ENCODE measurements at regions of chr19 and their contacts with region 1.

Region 1: DNA sequence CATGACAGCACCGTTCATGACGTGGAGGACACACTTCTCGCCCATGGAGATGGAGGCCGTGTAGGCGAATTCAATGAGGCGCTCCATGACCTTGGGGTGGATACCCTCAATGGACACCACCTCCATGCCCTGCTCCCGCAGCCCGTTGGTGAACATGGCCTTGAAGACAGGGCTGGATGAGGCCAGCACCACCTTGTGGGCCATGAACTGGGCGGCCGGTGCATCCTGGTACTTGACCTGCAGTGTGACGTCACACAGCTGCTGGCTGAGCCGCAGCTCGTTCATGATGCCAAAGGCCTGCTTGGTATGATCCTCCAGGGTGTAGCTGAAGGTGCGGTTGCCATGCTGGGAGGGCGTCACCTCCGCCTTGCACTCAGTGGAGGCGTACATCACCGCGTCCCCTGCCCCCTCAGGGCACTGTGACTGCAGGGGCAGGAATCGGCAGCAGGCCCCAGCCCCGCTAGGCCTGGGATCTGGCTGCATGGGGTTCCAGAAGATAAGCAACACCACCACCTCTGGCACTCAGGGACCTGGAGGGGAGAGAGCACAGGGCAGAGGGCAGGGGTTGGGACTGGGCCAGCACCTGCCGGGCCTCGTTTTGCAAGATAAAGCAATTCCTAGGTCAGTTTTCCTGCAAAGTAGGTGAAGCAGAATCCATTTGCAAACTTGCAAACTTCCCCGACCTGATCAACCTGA is 3.5 kb downstream of the KEAP1 start:
- DNase-seq: peak in 1 of 2 experiments; percentile 22
- ATAC-seq: no peak
- H3K4me3 ChIP-seq: no peak overlapping the region
- H3K27ac ChIP-seq: no peak overlapping the region
- H3K4me1 ChIP-seq: peaks cover 21% of the 10 kb centered on the region
- CTCF ChIP-seq: no peak
- EP300 ChIP-seq: no peak
- POLR2A ChIP-seq: no peak
- RAD21 ChIP-seq: no peak

Region 2: DNA sequence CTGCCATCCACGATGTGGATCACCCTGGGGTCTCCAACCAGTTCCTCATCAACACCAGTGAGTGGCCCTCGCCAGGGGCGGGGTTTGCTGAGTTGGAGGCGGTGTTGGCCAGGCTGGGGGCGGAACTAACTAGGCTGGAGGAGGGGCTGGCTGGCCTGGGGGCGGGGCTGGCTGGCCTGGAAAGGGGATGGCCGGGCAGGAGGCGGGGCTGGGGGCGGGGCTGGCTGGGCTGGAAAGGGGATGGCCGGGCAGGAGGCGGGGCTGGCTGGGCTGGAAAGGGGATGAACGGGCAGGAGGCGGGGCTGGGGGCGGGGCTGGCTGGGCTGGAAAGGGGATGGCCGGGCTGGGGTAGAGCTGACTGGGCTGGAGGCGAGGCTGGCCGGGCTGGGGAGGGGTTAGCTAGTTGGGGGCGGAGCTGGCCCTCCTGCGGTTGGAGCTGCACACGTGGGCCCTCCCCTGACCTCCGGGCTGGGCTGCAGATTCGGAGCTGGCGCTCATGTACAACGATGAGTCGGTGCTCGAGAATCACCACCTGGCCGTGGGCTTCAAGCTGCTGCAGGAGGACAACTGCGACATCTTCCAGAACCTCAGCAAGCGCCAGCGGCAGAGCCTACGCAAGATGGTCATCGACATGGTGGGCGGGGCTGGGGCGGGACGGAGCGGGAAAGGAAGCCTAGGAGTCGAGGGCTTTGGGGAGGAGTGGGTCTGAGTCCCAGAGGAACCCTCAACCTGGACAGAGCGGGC is 38.5 kb before region 1 on chr19:
- CTCF ChIA-PET with region 1: no interaction called
- POLR2A ChIA-PET with region 1: no interaction called
- DNase-seq: peak; percentile 67 to 81
- ATAC-seq: peak; percentile 88 to 95
- H3K4me3 ChIP-seq: no peak overlapping the region
- H3K27ac ChIP-seq: no peak overlapping the region
- H3K4me1 ChIP-seq: no peaks in the 10 kb centered on the region
- CTCF ChIP-seq: no peak
- EP300 ChIP-seq: no peak
- POLR2A ChIP-seq: no peak
- RAD21 ChIP-seq: no peak

Region 3: GRCh38 chr19:10478903-10479384 is 20.8 kb before region 1 on chr19:
- CTCF ChIA-PET with region 1: interaction called, 11 read pairs
- POLR2A ChIA-PET with region 1: no interaction called
- DNase-seq: peak; percentile 51 to 80
- ATAC-seq: peak; percentile 80 to 86
- H3K4me3 ChIP-seq: no peak overlapping the region
- H3K27ac ChIP-seq: no peak overlapping the region
- H3K4me1 ChIP-seq: peaks cover 3% of the 10 kb centered on the region; the same call in 1 of the 3 replicates
- CTCF ChIP-seq: peak; percentile 45
- EP300 ChIP-seq: no peak
- POLR2A ChIP-seq: no peak
- RAD21 ChIP-seq: no peak

Measured in A549 (cell line).